ENCODE measurements at regions of chr20 and their contacts with region 1.

Region 1: GRCh38 chr20:40990542-40991120 is 38.0 kb upstream of the TOP1 start:
- DNase-seq: peak; percentile 68 to 83
- ATAC-seq: peak; percentile 96 to 99 (median 97)
- H3K4me3 ChIP-seq: no peak overlapping the region
- H3K27ac ChIP-seq: peak overlapping the region in 1 of 10 donors; percentile 79
- H3K4me1 ChIP-seq: peaks cover 0 to 24% (median 6%) of the 10 kb centered on the region in 9 donors
- H3K27me3 ChIP-seq: no peaks in the 10 kb centered on the region
- CTCF ChIP-seq: peak; percentile 66 to 91 (median 83)

Region 2: GRCh38 chr20:40956542-40957264 is 33.9 kb before region 1 on chr20:
- intact Hi-C with region 1: no loop called
- DNase-seq: no peak
- ATAC-seq: peak in 1 of 8 donors; percentile 37
- H3K4me3 ChIP-seq: no peak overlapping the region
- H3K27ac ChIP-seq: no peak overlapping the region
- H3K4me1 ChIP-seq: peaks cover 0 to 10% (median 0%) of the 10 kb centered on the region in 9 donors
- H3K27me3 ChIP-seq: peaks cover 0 to 10% (median 0%) of the 10 kb centered on the region in 7 donors
- CTCF ChIP-seq: no peak

Region 3: GRCh38 chr20:41072190-41072863 is 81.7 kb after region 1 on chr20:
- intact Hi-C with region 1: loop called in 7 of 10 experiments (anchors 5 kb)
- DNase-seq: peak in 1 of 2 donors; percentile 18
- ATAC-seq: peak in 7 of 8 donors; percentile 60 to 88 (median 70)
- H3K4me3 ChIP-seq: no peak overlapping the region
- H3K27ac ChIP-seq: peak overlapping the region in 6 of 10 donors; percentile 10 to 56 (median 36)
- H3K4me1 ChIP-seq: peaks cover 3 to 86% (median 57%) of the 10 kb centered on the region in 9 donors
- H3K27me3 ChIP-seq: no peaks in the 10 kb centered on the region
- CTCF ChIP-seq: no peak

Region 4: GRCh38 chr20:41078329-41078728 is 87.7 kb after region 1 on chr20:
- intact Hi-C with region 1: loop called in 7 of 10 experiments (anchors 5 kb)
- DNase-seq: peak in 1 of 2 donors; percentile 32
- ATAC-seq: peak in 7 of 8 donors; percentile 73 to 89 (median 82)
- H3K4me3 ChIP-seq: peak overlapping the region in 1 of 10 donors; percentile 5
- H3K27ac ChIP-seq: peak overlapping the region in 5 of 10 donors; percentile 13 to 46 (median 28)
- H3K4me1 ChIP-seq: peaks cover 0 to 57% (median 42%) of the 10 kb centered on the region in 9 donors
- H3K27me3 ChIP-seq: no peaks in the 10 kb centered on the region
- CTCF ChIP-seq: peak; percentile 29 to 73 (median 56)

Region 5: GRCh38 chr20:41095110-41095969 is 104.7 kb after region 1 on chr20:
- intact Hi-C with region 1: loop called (anchors 1 to 5 kb)
- DNase-seq: peak; percentile 40 to 54
- ATAC-seq: peak in 7 of 8 donors; percentile 58 to 83 (median 70)
- H3K4me3 ChIP-seq: no peak overlapping the region
- H3K27ac ChIP-seq: no peak overlapping the region
- H3K4me1 ChIP-seq: peaks cover 0 to 15% (median 0%) of the 10 kb centered on the region in 9 donors
- H3K27me3 ChIP-seq: no peaks in the 10 kb centered on the region
- CTCF ChIP-seq: peak; percentile 69 to 92 (median 87)